Activated T-helper 1 cell treated with anti-CD3 and anti-CD28 coated beads, Interleukin-12 subunit alpha, Interleukin-12 subunit beta, Interleukin-2, Interleukin-4 antibody, amounts not matched to agents 30 ng/mL and 10 ng/mL and 1 ng/mL, durations not matched to agents 14 hours and 24 hours and 36 hours (primary cell): ENCODE measurements at regions of chr19 and their contacts with region 1.

Region 1: GRCh38 chr19:45643024-45643926 is 4.1 kb upstream of the EML2 start:
- DNase-seq: peak; percentile 86
- H3K4me3 Mint-ChIP-seq: peak overlapping the region; percentile 78
- H3K27ac Mint-ChIP-seq: peak overlapping the region; percentile 98
- H3K4me1 Mint-ChIP-seq: peaks cover 37% of the 10 kb centered on the region
- H3K27me3 Mint-ChIP-seq: no peaks in the 10 kb centered on the region

Region 2: GRCh38 chr19:45069056-45069455 is 574.2 kb before region 1 on chr19:
- intact Hi-C with region 1: no loop called
- DNase-seq: no peak
- H3K4me3 Mint-ChIP-seq: no peak overlapping the region
- H3K27ac Mint-ChIP-seq: no peak overlapping the region
- H3K4me1 Mint-ChIP-seq: no peaks in the 10 kb centered on the region
- H3K27me3 Mint-ChIP-seq: no peaks in the 10 kb centered on the region

Region 3: GRCh38 chr19:45423589-45424190 is 219.6 kb before region 1 on chr19 and contains the start of gene ERCC1:
- intact Hi-C with region 1: loop called (anchors 1 kb)
- DNase-seq: peak; percentile 82
- H3K4me3 Mint-ChIP-seq: peak within 1 kb of the TSS; percentile 97
- H3K27ac Mint-ChIP-seq: peak within 1 kb of the TSS; percentile 95
- H3K4me1 Mint-ChIP-seq: peaks cover 50% of the 10 kb centered on the region
- H3K27me3 Mint-ChIP-seq: peaks cover 9% of the 10 kb centered on the region
- total RNA-seq, gene ERCC1: 143 and 152 TPM in 2 replicates

Region 4: GRCh38 chr19:45523642-45524256 is 119.5 kb before region 1 on chr19:
- intact Hi-C with region 1: loop called (anchors 1 kb)
- DNase-seq: peak; percentile 65
- H3K4me3 Mint-ChIP-seq: no peak overlapping the region
- H3K27ac Mint-ChIP-seq: peak overlapping the region; percentile 37
- H3K4me1 Mint-ChIP-seq: peaks cover 14% of the 10 kb centered on the region
- H3K27me3 Mint-ChIP-seq: no peaks in the 10 kb centered on the region

Region 5: GRCh38 chr19:45615795-45616708 is 27.2 kb before region 1 on chr19:
- intact Hi-C with region 1: loop called (anchors 1 kb)
- DNase-seq: peak; percentile 66
- H3K4me3 Mint-ChIP-seq: no peak overlapping the region
- H3K27ac Mint-ChIP-seq: peak overlapping the region; percentile 52
- H3K4me1 Mint-ChIP-seq: peaks cover 13% of the 10 kb centered on the region
- H3K27me3 Mint-ChIP-seq: no peaks in the 10 kb centered on the region

Region 6: DNA sequence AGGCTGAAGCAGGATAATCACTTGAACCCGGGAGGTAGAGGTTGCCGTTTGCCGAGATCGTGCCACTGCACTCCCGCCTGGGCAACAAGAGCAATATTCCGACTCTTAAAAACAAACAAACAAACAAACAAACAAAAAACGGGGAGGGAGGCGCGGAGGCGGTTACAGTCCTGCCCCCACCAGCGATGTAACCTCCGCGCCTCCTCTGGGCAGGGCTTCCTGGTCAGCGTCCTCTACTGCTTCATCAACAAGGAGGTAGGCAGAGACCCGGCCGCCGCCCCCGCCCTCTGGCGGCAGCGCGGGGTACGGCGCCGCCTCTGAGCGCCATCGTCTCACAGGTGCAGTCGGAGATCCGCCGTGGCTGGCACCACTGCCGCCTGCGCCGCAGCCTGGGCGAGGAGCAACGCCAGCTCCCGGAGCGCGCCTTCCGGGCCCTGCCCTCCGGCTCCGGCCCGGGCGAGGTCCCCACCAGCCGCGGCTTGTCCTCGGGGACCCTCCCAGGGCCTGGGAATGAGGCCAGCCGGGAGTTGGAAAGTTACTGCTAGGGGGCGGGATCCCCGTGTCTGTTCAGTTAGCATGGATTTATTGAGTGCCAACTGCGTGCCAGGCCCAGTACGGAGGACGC is 38.2 kb after region 1 on chr19:
- intact Hi-C with region 1: loop called (anchors 1 kb)
- DNase-seq: peak; percentile 87
- H3K4me3 Mint-ChIP-seq: peak overlapping the region; percentile 80
- H3K27ac Mint-ChIP-seq: peak overlapping the region; percentile 82
- H3K4me1 Mint-ChIP-seq: peaks cover 20% of the 10 kb centered on the region
- H3K27me3 Mint-ChIP-seq: peaks cover 2% of the 10 kb centered on the region

Region 7: GRCh38 chr19:45862564-45863334 is 219.5 kb after region 1 on chr19 and contains the start of gene SYMPK:
- intact Hi-C with region 1: loop called (anchors 2 kb)
- DNase-seq: peak; percentile 99
- H3K4me3 Mint-ChIP-seq: peak within 1 kb of the TSS; percentile 94
- H3K27ac Mint-ChIP-seq: peak within 1 kb of the TSS; percentile 95
- H3K4me1 Mint-ChIP-seq: peaks cover 29% of the 10 kb centered on the region
- H3K27me3 Mint-ChIP-seq: peaks cover 31% of the 10 kb centered on the region
- total RNA-seq, gene SYMPK: 118 and 120 TPM in 2 replicates